ENCODE measurements at regions of chr2 and their contacts with region 1.

Region 1: DNA sequence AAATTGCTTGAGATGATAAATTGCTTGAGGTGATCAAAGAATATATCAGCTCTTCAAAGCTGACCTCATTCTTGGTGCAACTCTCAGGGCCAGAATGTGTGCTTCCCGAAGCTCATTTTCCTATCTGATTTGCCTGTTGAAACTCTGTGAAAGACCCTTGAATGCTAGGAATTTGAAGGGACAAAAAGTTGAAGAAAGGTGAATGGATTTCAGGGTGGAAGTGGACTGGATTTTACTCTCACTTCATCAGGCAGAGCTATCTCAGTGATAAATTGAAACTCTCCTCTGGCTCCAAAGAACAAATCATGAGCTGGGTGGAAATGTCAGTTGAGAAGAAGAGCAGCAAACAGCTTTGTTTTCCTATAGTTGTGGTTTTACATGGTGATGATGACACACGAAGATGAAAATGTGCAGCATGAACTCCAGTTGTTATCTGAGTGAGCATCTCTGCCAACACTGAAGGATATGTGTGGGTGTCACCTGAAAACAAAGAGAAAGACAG is 34.4 kb downstream of the CD28 start:
- DNase-seq: peak; percentile 66
- H3K4me3 Mint-ChIP-seq: peak overlapping the region; percentile 67
- H3K27ac Mint-ChIP-seq: peak overlapping the region; percentile 97
- H3K4me1 Mint-ChIP-seq: peaks cover 78% of the 10 kb centered on the region
- H3K27me3 Mint-ChIP-seq: no peaks in the 10 kb centered on the region

Region 2: DNA sequence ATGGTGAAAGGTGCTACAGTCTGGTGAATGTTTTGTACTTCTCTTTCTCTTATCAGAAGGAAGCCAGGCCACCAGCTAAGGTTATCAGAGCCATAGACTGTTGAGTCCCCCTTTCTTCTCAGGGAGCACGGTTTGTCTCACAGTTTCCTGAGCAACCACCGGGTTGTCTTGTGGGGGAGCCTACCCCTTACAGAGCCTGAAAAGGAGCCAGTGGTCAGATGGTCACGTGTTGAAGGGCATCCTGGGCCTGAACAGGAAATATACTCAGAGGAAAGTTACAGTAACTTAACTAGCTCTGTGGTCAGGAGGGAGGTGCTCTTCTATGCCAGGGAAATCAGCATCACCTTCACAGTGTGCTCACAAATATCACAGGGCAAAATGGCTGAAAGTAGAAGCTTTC is 22.7 kb before region 1 on chr2:
- intact Hi-C with region 1: loop called (anchors 1 kb)
- DNase-seq: peak; percentile 67
- H3K4me3 Mint-ChIP-seq: peak overlapping the region; percentile 73
- H3K27ac Mint-ChIP-seq: peak overlapping the region; percentile 96
- H3K4me1 Mint-ChIP-seq: peaks cover 96% of the 10 kb centered on the region
- H3K27me3 Mint-ChIP-seq: no peaks in the 10 kb centered on the region

Region 3: DNA sequence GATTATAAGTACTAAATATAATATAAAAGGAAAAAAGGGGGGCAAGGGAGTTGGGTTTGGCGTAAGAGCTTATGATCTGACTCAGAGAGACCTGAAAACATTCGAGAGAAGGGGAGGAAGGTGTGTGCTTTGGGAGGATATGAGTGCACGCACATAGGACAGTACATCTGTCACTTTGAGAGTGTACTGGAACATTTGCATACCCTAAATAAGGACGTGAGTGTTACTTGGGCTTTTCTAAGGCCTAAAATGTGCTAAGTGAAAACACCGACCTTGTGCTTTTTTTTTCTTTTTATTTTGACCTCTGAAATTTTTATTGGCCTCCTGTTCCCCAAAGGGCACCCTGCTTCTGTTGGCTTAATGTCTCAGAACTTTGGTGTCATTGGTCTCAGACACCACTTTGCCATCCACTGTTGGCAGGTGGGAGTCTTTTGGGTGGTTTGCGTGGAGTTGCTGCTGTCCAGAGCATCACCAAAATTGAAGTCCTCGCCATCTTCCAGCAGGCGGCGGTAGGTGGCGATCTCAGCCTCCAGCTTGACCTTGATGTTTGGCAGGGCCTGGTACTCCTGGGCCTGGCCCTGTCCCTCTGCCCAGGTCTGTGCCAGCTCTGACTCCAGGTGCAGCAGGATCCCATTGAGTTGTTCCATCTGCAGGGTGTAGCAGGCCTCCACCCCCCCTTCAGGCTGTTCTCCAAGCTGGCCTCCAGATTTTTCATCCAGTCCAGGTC is 23.3 kb after region 1 on chr2:
- intact Hi-C with region 1: loop called (anchors 1 kb)
- DNase-seq: peak; percentile 20
- H3K4me3 Mint-ChIP-seq: peak overlapping the region; percentile 22
- H3K27ac Mint-ChIP-seq: peak overlapping the region; percentile 95
- H3K4me1 Mint-ChIP-seq: peaks cover 66% of the 10 kb centered on the region
- H3K27me3 Mint-ChIP-seq: no peaks in the 10 kb centered on the region

Region 4: DNA sequence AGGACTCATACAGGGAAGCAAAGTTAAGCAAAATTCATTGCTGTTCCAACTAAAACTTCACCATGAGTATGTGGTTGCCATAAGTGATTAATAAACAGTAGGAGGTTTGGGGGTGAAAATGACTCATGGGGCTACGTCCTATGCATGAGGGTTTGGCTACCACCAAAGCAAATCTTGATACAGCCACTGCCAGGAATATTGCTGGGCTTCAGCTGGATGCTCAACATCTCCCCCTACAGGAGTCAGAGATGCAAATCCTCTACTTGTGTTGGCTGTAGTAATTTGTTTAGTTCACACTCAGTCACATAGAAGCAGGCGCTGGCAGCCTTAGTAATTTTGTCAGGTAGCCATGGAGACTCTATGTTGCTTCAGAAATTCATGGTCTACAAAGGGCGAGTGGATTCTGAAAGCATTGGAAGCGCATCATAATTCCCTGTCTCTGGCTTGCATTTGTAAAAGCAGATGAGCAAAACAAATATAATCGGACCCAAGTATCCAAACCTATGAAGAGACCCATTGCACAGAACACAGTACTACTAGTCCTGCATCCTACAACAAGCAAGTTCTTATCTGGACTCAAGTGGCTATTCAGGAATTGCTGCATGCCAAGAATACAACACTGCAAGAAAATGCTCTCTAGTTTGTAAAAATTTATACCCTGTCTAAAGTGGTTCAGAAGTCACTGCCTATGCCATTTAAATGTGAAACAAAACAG is 41.6 kb after region 1 on chr2:
- intact Hi-C with region 1: loop called (anchors 1 kb)
- DNase-seq: peak; percentile 50
- H3K4me3 Mint-ChIP-seq: no peak overlapping the region
- H3K27ac Mint-ChIP-seq: peak overlapping the region; percentile 92
- H3K4me1 Mint-ChIP-seq: peaks cover 63% of the 10 kb centered on the region
- H3K27me3 Mint-ChIP-seq: no peaks in the 10 kb centered on the region

Region 5: GRCh38 chr2:203893401-203893800 is 152.6 kb after region 1 on chr2:
- intact Hi-C with region 1: loop called (anchors 2 kb)
- DNase-seq: no peak
- H3K4me3 Mint-ChIP-seq: no peak overlapping the region
- H3K27ac Mint-ChIP-seq: peak overlapping the region; percentile 89
- H3K4me1 Mint-ChIP-seq: peaks cover 73% of the 10 kb centered on the region
- H3K27me3 Mint-ChIP-seq: no peaks in the 10 kb centered on the region

Measured in activated T-helper 1 cell treated with anti-CD3 and anti-CD28 coated beads, Interleukin-12 subunit alpha, Interleukin-12 subunit beta, Interleukin-2, Interleukin-4 antibody, amounts not matched to agents 30 ng/mL and 10 ng/mL and 1 ng/mL, durations not matched to agents 14 hours and 24 hours and 36 hours (primary cell).